Aorta (tissue), 5 donors: ENCODE measurements at regions of chr15 and their contacts with region 1.

Region 1: GRCh38 chr15:86125782-86126181 is 46.1 kb downstream of the AGBL1 start:
- DNase-seq: no peak
- ATAC-seq: no peak
- H3K4me3 ChIP-seq: no peak overlapping the region
- H3K27ac ChIP-seq: no peak overlapping the region
- H3K4me1 ChIP-seq: no peaks in the 10 kb centered on the region
- H3K27me3 ChIP-seq: peaks cover 0 to 2% of the 10 kb centered on the region in 2 donors

Region 2: GRCh38 chr15:87374339-87374738 is 1248.6 kb after region 1 on chr15:
- intact Hi-C with region 1: loop called in 1 of 2 experiments (anchors 10 kb)
- DNase-seq: no peak
- ATAC-seq: no peak
- H3K4me3 ChIP-seq: no peak overlapping the region
- H3K27ac ChIP-seq: no peak overlapping the region
- H3K4me1 ChIP-seq: no peaks in the 10 kb centered on the region
- H3K27me3 ChIP-seq: no peaks in the 10 kb centered on the region